PC-3 (cell line): ENCODE measurements at regions of chr3 and their contacts with region 1.

Region 1: GRCh38 chr3:183122257-183122932 is 23.1 kb upstream of the MCCC1 start:
- DNase-seq: peak; percentile 86
- ATAC-seq: peak; percentile 81
- H3K4me3 ChIP-seq: no peak overlapping the region
- H3K27ac ChIP-seq: peak overlapping the region; percentile 62
- H3K4me1 ChIP-seq: peaks cover 28% of the 10 kb centered on the region
- H3K27me3 ChIP-seq: no peaks in the 10 kb centered on the region
- CTCF ChIP-seq: peak; percentile 97

Region 2: GRCh38 chr3:182713743-182714517 is 408.5 kb before region 1 on chr3:
- CTCF ChIA-PET with region 1: no interaction called
- POLR2A ChIA-PET with region 1: no interaction called
- intact Hi-C with region 1: loop called (anchors 2 kb)
- DNase-seq: peak; percentile 81
- ATAC-seq: peak; percentile 72
- H3K4me3 ChIP-seq: no peak overlapping the region
- H3K27ac ChIP-seq: no peak overlapping the region
- H3K4me1 ChIP-seq: 0 out of 2 replicates have a peak, but pooled peaks cover 3% of the 10 kb centered on the region
- H3K27me3 ChIP-seq: no peaks in the 10 kb centered on the region
- CTCF ChIP-seq: peak; percentile 74

Region 3: DNA sequence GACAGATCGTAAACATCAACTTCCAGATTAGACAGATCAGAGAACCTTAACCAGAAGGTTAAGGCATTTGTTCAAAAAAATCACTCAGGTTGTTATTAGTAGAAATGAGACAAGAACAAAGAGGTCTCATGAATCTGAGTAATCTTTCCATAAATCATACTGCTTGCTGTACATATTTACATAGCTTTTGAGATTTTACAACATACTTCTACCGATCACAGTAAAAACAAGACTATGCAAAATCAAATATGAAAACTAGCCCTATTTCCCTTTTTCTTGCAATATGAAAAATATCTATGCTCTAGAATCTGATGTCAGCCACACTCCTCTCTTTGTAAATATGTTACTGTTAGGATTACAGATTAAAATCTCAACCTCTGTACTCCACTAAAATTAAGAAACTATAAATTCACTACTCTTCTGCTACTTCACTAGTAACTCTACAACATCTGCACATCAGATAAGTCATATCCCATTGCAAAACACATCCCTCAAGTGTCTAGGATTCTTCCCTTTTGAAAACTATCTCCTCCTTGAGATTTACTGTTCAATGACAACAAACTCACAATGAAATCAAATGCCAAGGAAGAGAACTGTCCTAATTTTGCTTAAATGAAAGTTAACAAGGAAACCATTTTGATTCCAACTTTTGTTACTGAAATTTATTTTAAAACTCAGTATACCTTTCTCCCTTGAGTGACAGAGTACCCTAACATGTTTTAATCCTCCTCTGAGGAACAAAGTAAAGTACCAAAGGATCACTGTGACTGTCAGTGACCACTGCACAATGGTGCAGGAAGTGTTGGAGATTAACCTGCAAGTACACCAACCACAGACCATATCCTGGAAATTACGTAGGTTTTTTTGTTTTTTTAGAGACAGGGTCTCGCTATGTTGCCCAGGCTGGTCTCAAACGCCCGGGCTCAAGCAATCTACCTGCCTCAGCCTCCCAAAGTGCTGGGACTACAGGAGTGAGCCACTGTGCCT is 154.9 kb before region 1 on chr3:
- CTCF ChIA-PET with region 1: no interaction called
- POLR2A ChIA-PET with region 1: no interaction called
- intact Hi-C with region 1: loop called (anchors 5 kb)
- DNase-seq: no peak
- ATAC-seq: peak; percentile 77
- H3K4me3 ChIP-seq: no peak overlapping the region
- H3K27ac ChIP-seq: peak overlapping the region; percentile 8; the same call in 1 of the 2 replicates
- H3K4me1 ChIP-seq: peaks cover 43% of the 10 kb centered on the region
- H3K27me3 ChIP-seq: no peaks in the 10 kb centered on the region
- CTCF ChIP-seq: no peak

Region 4: GRCh38 chr3:183178629-183179549 is 56.5 kb after region 1 on chr3:
- CTCF ChIA-PET with region 1: interaction called, 25 read pairs
- POLR2A ChIA-PET with region 1: no interaction called
- intact Hi-C with region 1: loop called (anchors 1 kb)
- DNase-seq: peak; percentile 70
- ATAC-seq: peak; percentile 61
- H3K4me3 ChIP-seq: peak overlapping the region; percentile 85
- H3K27ac ChIP-seq: no peak overlapping the region
- H3K4me1 ChIP-seq: peaks cover 17% of the 10 kb centered on the region; the same call in 1 of the 2 replicates
- H3K27me3 ChIP-seq: no peaks in the 10 kb centered on the region
- CTCF ChIP-seq: peak; percentile 60

Region 5: GRCh38 chr3:183274609-183275008 is 152.2 kb after region 1 on chr3:
- CTCF ChIA-PET with region 1: no interaction called
- POLR2A ChIA-PET with region 1: no interaction called
- intact Hi-C with region 1: loop called (anchors 5 kb)
- DNase-seq: peak; percentile 90
- ATAC-seq: peak; percentile 53
- H3K4me3 ChIP-seq: peak overlapping the region; percentile 37; the same call in 1 of the 2 replicates
- H3K27ac ChIP-seq: peak overlapping the region; percentile 89
- H3K4me1 ChIP-seq: peaks cover 78% of the 10 kb centered on the region
- H3K27me3 ChIP-seq: no peaks in the 10 kb centered on the region
- CTCF ChIP-seq: no peak

Region 6: GRCh38 chr3:183468424-183468823 is 346.0 kb after region 1 on chr3:
- CTCF ChIA-PET with region 1: interaction called, 3 read pairs
- POLR2A ChIA-PET with region 1: no interaction called
- intact Hi-C with region 1: loop called (anchors 1 kb)
- DNase-seq: no peak
- ATAC-seq: no peak
- H3K4me3 ChIP-seq: no peak overlapping the region
- H3K27ac ChIP-seq: no peak overlapping the region
- H3K4me1 ChIP-seq: peaks cover 3% of the 10 kb centered on the region; the same call in 1 of the 2 replicates
- H3K27me3 ChIP-seq: no peaks in the 10 kb centered on the region
- CTCF ChIP-seq: no peak